Thyroid gland (tissue), 4 donors: ENCODE measurements at regions of chr6 and their contacts with region 1.

Region 1: GRCh38 chr6:41367700-41368099 is 32.3 kb downstream of the NCR2 start:
- DNase-seq: peak; percentile 70 to 73
- H3K4me3 ChIP-seq: no peak overlapping the region
- H3K27ac ChIP-seq: no peak overlapping the region
- H3K4me1 ChIP-seq: peaks cover 15 to 20% of the 10 kb centered on the region in 2 donors
- H3K27me3 ChIP-seq: no peaks in the 10 kb centered on the region
- CTCF ChIP-seq: peak in 5 of 6 experiments; percentile 41 to 81 (median 68)
- POLR2A ChIP-seq: no peak

Region 2: GRCh38 chr6:41424370-41425058 is 56.8 kb after region 1 on chr6:
- intact Hi-C with region 1: no loop called
- DNase-seq: peak; percentile 89 to 90
- H3K4me3 ChIP-seq: no peak overlapping the region
- H3K27ac ChIP-seq: peak overlapping the region in 1 of 3 donors; percentile 1
- H3K4me1 ChIP-seq: peaks cover 14 to 46% of the 10 kb centered on the region in 2 donors
- H3K27me3 ChIP-seq: no peaks in the 10 kb centered on the region
- CTCF ChIP-seq: peak; percentile 55 to 90 (median 82)
- POLR2A ChIP-seq: no peak

Region 3: GRCh38 chr6:41455818-41456217 is 88.1 kb after region 1 on chr6:
- intact Hi-C with region 1: loop called (anchors 5 kb)
- DNase-seq: no peak
- H3K4me3 ChIP-seq: no peak overlapping the region
- H3K27ac ChIP-seq: no peak overlapping the region
- H3K4me1 ChIP-seq: peaks cover 0 to 15% of the 10 kb centered on the region in 2 donors
- H3K27me3 ChIP-seq: no peaks in the 10 kb centered on the region
- CTCF ChIP-seq: no peak
- POLR2A ChIP-seq: no peak

Region 4: DNA sequence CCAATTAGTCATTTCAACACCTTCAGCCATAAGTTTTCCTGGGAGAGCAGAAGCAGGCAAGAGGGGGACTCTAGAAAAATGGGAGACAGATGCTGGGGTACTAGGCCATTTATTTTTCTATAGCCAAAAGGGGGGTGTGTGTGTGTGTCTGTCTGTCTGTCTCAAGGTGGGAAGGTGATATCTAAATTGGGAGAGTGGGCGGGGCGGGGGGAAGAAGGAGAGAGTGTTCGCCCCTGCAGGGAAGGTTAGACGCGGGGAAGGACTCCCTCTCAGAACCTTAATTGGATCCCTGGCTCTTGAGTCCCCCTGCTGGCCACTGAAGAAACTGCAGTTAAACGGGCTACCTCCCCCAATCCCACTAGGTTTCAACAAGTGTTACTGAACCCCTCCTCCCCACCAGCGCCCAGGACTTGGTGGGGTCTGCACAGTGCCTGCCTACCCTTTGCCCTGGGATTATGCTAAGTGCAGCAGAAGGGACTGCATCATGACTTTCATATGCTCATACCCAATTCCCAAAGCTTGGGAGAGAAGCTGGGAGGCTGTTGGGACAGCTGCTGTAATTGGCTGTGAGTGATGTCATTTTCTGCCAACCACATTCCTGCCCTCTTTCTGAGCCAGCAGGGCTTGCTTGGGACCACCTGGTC is 224.3 kb after region 1 on chr6:
- intact Hi-C with region 1: loop called (anchors 5 kb)
- DNase-seq: peak; percentile 71 to 74
- H3K4me3 ChIP-seq: no peak overlapping the region
- H3K27ac ChIP-seq: no peak overlapping the region
- H3K4me1 ChIP-seq: no peaks in the 10 kb centered on the region
- H3K27me3 ChIP-seq: no peaks in the 10 kb centered on the region
- CTCF ChIP-seq: peak; percentile 85 to 96 (median 92)
- POLR2A ChIP-seq: no peak

Region 5: DNA sequence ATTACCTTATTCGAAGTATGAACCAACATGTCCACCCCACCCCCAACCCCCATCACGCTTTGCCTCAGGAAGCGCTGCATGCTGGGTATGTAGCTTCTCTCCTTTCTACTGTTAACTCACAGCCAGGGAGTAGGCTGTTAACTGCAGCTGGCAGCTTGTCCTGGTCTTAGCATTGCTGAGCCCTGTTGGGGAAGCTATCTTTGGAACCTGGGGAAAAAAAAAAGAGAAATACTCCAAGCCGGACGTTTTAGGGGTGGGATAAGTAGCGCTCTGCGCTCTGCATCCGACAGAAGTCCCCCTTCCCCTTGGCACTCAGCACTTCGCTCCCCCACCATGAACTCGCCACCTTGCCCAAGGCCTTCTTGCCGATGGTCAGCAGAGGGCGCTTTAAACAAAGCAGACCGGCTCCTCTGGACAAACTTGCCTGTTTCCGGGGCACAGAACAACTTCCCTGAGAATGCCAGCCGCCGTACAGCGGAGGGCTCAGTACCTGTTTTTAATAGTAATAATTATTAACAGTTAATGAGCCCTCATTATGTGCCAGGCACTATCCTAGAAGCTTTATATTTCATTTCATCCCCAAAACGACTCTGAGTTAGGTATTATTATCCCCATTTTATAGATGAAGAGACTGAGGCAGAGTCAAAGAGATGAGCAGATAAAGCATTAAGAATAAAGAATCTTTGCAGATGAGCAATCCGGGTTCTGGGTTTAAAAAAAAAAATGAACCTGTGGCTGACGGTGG is 235.3 kb after region 1 on chr6:
- intact Hi-C with region 1: loop called (anchors 5 kb)
- DNase-seq: peak; percentile 77 to 85
- H3K4me3 ChIP-seq: no peak overlapping the region
- H3K27ac ChIP-seq: no peak overlapping the region
- H3K4me1 ChIP-seq: peaks cover 0 to 11% of the 10 kb centered on the region in 2 donors
- H3K27me3 ChIP-seq: no peaks in the 10 kb centered on the region
- CTCF ChIP-seq: peak; percentile 54 to 90 (median 82)
- POLR2A ChIP-seq: no peak

Region 6: DNA sequence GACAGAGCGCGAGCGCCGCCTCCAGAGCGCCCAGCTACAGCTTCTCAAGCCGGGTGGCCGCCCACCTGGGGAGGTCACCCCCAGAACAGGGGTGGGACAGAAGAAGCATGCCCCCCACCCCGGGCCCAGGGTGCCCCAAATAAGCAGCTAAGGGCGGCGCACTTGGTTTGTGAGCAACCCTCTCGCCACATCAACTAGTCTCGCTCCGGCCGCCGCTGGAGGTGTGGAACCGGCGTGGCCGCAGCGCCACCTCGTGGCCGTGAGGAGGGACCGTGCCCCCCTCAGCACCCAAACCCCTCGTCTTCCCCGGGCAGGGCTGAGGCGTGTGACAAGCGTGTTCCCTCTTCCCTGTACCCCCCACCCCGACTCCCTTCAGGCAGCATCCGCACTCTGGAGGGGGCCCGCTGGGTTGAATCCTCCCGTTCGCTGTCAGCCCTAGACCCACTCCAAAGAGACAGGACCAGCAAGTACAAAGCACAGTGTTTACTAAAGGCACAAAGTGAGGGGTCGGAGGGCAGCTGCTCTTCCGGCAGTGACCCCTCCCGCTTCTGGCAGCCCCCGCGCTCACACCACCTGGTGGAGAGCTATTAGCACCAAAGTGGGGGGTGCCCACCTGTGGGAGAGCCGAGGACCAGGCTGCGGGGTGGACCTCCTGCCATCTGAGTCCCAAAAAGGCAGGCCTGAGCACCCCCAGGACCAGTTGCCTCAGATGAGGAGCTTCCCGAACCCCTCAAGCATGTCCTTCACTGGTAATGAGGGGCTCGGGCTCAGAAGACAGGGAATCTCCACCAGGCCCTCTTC is 316.0 kb after region 1 on chr6:
- intact Hi-C with region 1: loop called (anchors 2 kb)
- DNase-seq: peak; percentile 81 to 84
- H3K4me3 ChIP-seq: peak overlapping the region in 1 of 3 donors; percentile 12
- H3K27ac ChIP-seq: no peak overlapping the region
- H3K4me1 ChIP-seq: peaks cover 13 to 41% of the 10 kb centered on the region in 2 donors
- H3K27me3 ChIP-seq: no peaks in the 10 kb centered on the region
- CTCF ChIP-seq: peak; percentile 64 to 94 (median 84)
- POLR2A ChIP-seq: no peak

Region 7: DNA sequence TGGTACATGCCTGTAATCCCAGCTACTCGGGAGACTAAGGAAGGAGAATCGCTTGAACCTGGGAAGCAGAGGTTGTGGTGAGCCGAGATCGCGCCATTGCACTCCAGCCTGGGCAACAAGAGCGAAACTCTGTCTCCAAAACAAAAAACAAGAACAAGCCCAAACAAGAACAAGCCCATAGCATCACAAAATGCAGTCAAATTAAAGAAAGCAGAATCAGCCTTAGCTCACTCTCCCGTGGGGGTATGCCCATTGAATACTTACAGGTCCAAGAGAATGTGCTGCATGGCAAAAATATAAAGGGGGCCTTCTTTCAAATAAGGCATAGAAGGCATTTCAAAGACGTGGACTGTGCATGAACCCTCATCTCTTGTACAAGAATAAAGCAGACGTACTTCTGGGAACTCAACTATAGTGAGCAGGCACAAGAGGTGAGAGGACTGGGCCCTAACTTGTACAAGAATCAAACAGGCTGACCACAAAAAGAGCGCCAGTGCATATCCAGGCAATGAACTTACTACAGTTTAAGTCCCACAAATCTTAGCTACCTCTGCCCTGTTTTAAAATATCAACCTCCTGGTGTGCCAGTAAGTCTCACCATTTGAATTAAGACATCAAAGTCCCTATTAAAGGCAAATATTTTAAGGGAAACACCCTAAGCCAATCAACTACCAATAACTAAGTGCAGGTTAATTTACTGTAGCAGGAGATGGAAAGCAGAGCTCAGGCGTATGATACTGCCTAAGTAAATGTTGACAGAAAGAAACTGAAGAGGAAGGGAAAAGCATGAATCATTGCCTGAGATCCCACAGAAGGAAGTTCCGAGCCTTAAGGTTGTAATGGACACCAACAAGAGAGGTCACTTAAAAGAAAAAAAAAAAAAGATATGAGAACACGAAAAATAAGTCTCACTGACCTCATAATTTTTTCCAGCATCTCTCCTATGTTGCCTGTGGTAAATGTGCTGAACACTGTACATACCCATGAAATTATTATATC is 457.2 kb after region 1 on chr6:
- intact Hi-C with region 1: no loop called
- DNase-seq: no peak
- H3K4me3 ChIP-seq: no peak overlapping the region
- H3K27ac ChIP-seq: no peak overlapping the region
- H3K4me1 ChIP-seq: no peaks in the 10 kb centered on the region
- H3K27me3 ChIP-seq: no peaks in the 10 kb centered on the region
- CTCF ChIP-seq: no peak
- POLR2A ChIP-seq: no peak